PC-3 (cell line): ENCODE measurements at regions of chr13 and their contacts with region 1.

Region 1: GRCh38 chr13:75876360-75877050 is 240.4 kb downstream of the LMO7 start:
- DNase-seq: peak; percentile 72
- ATAC-seq: peak; percentile 97
- H3K4me3 ChIP-seq: no peak overlapping the region
- H3K27ac ChIP-seq: no peak overlapping the region
- H3K4me1 ChIP-seq: peaks cover 3% of the 10 kb centered on the region; the same call in 1 of the 2 replicates
- H3K27me3 ChIP-seq: no peaks in the 10 kb centered on the region
- CTCF ChIP-seq: peak; percentile 74

Region 2: DNA sequence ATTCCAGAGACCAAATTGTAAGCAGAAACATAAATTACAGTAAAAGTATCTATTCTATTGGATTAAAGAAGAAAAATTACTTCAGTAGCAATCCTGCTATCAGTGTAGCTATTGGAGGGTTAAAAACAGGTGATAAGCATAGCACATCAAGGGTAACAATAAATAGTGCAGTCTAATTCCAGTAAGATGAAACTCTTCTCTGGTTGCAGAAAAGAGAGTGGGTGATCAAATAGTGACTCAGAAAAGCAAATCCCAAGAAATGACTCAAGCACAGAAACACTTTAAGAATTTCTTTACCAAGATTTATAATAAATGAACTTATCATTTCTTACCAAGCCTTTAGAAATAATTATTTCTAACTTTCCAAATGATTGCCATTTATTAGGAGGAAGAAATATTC is 104.7 kb before region 1 on chr13:
- CTCF ChIA-PET with region 1: no interaction called
- POLR2A ChIA-PET with region 1: no interaction called
- intact Hi-C with region 1: no loop called
- DNase-seq: peak; percentile 80
- ATAC-seq: peak; percentile 90
- H3K4me3 ChIP-seq: peak overlapping the region; percentile 50; the same call in 1 of the 2 replicates
- H3K27ac ChIP-seq: peak overlapping the region; percentile 95
- H3K4me1 ChIP-seq: peaks cover 68% of the 10 kb centered on the region
- H3K27me3 ChIP-seq: no peaks in the 10 kb centered on the region
- CTCF ChIP-seq: no peak

Region 3: GRCh38 chr13:76016799-76017400 is 140.4 kb after region 1 on chr13:
- CTCF ChIA-PET with region 1: no interaction called
- POLR2A ChIA-PET with region 1: no interaction called
- intact Hi-C with region 1: loop called (anchors 1 kb)
- DNase-seq: peak; percentile 67
- ATAC-seq: peak; percentile 18; the same call in 1 of the 2 replicates
- H3K4me3 ChIP-seq: no peak overlapping the region
- H3K27ac ChIP-seq: no peak overlapping the region
- H3K4me1 ChIP-seq: peaks cover 47% of the 10 kb centered on the region
- H3K27me3 ChIP-seq: no peaks in the 10 kb centered on the region
- CTCF ChIP-seq: peak; percentile 64

Region 4: DNA sequence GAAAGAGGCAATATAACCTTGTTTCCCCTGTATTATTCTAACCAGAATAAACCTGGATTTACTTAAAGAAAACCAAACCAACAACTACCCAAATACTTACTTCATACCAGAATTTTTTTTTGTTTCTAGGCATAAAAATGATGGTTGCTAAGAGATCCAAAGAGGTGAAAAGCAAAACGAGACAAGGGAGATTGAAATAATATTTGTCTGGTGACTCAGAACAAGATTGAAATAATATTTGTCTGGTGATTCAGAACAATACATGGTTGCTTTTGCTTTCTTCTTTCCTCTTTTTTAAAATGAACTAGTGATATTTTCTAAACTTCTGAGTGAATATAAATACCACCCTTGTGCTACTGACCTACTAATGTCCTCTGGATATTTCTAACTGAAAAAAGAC is 416.8 kb after region 1 on chr13:
- CTCF ChIA-PET with region 1: no interaction called
- POLR2A ChIA-PET with region 1: no interaction called
- intact Hi-C with region 1: loop called (anchors 10 kb)
- DNase-seq: peak; percentile 76
- ATAC-seq: peak; percentile 92
- H3K4me3 ChIP-seq: no peak overlapping the region
- H3K27ac ChIP-seq: peak overlapping the region; percentile 64
- H3K4me1 ChIP-seq: peaks cover 15% of the 10 kb centered on the region
- H3K27me3 ChIP-seq: no peaks in the 10 kb centered on the region
- CTCF ChIP-seq: no peak

Region 5: DNA sequence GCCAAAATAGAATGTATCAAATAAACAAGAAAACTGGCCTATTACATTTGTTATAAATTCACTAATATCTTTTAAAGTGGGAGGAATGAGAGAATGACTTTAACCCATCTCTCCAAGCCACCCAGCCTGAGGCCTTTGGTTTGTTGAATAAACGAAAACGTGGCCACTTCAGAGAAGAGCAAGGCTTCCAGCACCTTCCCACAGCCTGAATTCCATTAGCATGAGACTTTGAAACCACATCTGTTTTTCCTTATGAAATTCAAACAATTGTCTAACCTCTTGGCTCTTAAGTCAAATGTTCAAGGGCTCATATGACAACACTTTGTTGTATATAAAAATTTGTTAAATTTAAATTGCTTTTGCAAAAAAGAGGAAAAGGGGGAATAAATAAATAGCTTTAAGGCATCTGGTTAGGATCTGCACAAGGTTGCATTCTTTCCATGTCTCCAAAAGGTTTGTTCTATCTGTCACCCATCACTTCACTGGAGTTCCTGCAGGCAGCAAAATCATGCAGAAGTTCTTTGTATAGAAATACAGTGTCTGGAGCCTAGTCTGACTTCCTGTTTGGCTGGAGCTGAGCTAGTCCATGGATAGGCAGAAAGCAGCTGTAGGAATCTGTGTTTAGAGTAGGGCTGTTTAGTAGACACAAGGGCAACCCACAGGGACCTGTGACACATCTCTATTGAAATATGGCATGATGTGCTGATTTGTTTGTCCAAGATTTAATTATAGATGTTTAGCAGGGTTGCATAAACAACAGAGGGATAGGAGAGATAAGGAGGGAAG is 507.4 kb after region 1 on chr13:
- CTCF ChIA-PET with region 1: interaction called, 3 read pairs
- POLR2A ChIA-PET with region 1: no interaction called
- intact Hi-C with region 1: loop called (anchors 5 kb)
- DNase-seq: peak; percentile 76
- ATAC-seq: peak; percentile 89
- H3K4me3 ChIP-seq: no peak overlapping the region
- H3K27ac ChIP-seq: peak overlapping the region; percentile 53
- H3K4me1 ChIP-seq: peaks cover 19% of the 10 kb centered on the region
- H3K27me3 ChIP-seq: no peaks in the 10 kb centered on the region
- CTCF ChIP-seq: no peak

Region 6: GRCh38 chr13:76473552-76474134 is 597.1 kb after region 1 on chr13:
- CTCF ChIA-PET with region 1: interaction called, 6 read pairs
- POLR2A ChIA-PET with region 1: no interaction called
- intact Hi-C with region 1: loop called (anchors 1 kb)
- DNase-seq: peak; percentile 79
- ATAC-seq: peak; percentile 93
- H3K4me3 ChIP-seq: no peak overlapping the region
- H3K27ac ChIP-seq: no peak overlapping the region
- H3K4me1 ChIP-seq: no peaks in the 10 kb centered on the region
- H3K27me3 ChIP-seq: no peaks in the 10 kb centered on the region
- CTCF ChIP-seq: peak; percentile 80